GM10248 (cell line): ENCODE measurements at regions of chr5 and their contacts with region 1.

Region 1: DNA sequence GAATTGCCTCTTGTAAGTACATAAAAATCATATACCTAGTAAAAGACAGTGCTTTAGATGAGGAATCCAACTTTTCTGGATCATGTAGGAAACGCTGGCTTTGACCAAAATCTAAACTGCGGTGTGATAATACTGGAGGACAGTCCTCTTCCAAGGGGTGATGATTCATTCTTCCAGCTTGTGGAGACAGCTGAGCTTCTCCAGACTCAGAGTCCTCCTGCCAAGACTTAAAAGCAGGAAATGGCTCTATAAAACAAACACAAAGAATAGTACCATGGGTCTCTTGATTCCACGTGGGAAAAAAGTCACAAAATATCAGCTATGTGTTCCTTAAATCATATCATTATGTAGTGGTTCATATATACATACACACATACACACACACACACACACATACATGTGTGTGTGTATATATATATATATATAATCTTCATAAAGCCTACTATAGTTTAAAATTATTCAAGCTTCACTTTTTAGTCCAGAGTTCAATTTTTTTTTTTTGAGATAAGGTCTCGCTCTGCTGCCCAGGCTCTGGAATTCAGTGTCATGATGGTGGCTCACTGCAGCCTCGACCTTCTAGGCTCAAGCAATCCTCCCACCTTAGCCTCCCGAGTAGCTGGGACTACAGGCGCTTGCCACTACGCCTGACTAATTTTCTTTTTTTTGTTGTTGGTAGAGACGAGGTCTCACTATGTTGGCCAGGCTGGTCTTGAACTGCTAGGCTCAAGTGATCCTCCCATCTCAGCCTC is 65.0 kb downstream of the PKD2L2 start:
- DNase-seq: no peak
- CTCF ChIP-seq: no peak

Region 2: GRCh38 chr5:137989419-137989818 is 35.1 kb after region 1 on chr5:
- CTCF ChIA-PET with region 1: interaction called, 10 read pairs
- POLR2A ChIA-PET with region 1: no interaction called
- DNase-seq: no peak
- CTCF ChIP-seq: no peak